Activated B cell treated with CpG ODN at 0.5 μM for 24 hours (primary cell): ENCODE measurements at regions of chr5 and their contacts with region 1.

Region 1: GRCh38 chr5:35089334-35090314 is 41.9 kb upstream of the AGXT2 start:
- DNase-seq: no peak
- ATAC-seq: no peak
- H3K4me3 Mint-ChIP-seq: no peak overlapping the region
- H3K27ac Mint-ChIP-seq: no peak overlapping the region
- H3K4me1 Mint-ChIP-seq: no peaks in the 10 kb centered on the region
- H3K27me3 Mint-ChIP-seq: peaks cover 3% of the 10 kb centered on the region
- CTCF ChIP-seq: peak; percentile 59

Region 2: DNA sequence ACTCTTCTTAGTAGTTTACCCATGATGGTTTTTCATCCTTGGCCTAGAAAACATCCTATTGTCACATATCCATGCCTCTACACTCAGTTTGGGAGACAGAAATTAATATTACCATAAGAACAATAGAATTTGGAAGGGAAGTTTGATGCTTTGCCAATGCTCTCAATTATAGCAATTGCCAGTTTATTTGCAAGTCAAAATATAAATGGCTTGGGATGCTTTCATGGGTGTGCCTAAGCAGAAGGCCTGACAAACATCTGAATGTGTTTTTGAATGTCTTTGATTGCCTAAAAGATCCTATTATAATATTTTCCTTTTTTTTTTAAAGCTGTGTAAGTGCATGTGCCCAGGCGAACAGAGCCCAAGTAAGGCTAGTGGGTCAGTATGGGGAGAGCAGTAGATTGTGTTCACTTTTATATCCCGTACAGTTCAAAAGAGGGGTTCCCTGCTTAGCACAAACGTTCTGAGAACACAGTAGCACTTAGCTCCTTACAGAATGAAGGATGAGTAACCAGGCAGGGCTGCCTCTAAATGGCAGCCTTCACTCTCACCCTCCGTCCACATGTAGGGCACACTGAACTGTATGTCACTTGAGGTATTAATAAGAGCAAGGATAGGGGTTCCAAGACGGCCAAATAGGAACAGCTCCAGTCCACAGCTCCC is 14.1 kb after region 1 on chr5:
- CTCF ChIA-PET with region 1: no interaction called
- POLR2A ChIA-PET with region 1: no interaction called
- intact Hi-C with region 1: no loop called
- DNase-seq: no peak
- ATAC-seq: no peak
- H3K4me3 Mint-ChIP-seq: no peak overlapping the region
- H3K27ac Mint-ChIP-seq: no peak overlapping the region
- H3K4me1 Mint-ChIP-seq: no peaks in the 10 kb centered on the region
- H3K27me3 Mint-ChIP-seq: peaks cover 14% of the 10 kb centered on the region
- CTCF ChIP-seq: no peak

Region 3: DNA sequence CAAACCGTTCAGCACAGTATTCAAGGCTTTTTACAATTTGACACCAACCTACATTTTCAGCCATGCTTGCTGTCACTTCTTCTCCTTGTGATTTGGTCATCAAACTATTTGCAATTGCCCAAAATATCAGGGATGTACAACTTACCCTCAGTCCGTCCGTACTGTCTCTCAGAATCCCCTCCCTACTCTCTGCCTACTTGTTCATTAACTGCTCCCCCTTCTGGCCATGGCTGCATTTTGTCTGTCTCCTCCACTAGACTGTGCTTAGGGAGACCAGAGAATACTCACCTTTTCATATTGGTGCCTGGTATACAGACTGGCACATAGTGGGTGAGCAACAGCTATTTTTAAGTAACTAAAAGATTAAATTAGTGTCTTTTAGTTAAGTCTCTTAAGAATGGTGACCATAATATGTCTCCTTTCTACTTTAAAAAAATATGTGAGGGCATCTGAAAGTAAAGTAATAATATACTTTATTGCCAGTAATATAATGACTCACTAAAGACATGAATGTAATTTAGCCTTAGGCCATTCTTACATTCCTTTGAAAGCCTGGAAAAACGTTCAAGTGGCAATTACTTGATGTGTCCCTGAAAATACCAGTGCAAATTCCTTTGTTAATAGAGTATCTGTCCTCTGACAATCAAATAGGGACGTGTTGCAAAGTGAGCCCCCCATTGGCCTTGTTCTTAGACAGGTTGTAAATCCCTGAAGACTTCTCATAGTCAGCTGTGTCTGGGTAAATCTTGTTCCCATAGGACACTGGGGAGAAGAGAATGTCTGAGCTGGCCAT is 112.9 kb after region 1 on chr5:
- CTCF ChIA-PET with region 1: interaction called, 9 read pairs
- POLR2A ChIA-PET with region 1: no interaction called
- intact Hi-C with region 1: loop called (anchors 1 kb)
- DNase-seq: no peak
- ATAC-seq: peak; percentile 93
- H3K4me3 Mint-ChIP-seq: no peak overlapping the region
- H3K27ac Mint-ChIP-seq: no peak overlapping the region
- H3K4me1 Mint-ChIP-seq: peaks cover 2% of the 10 kb centered on the region
- H3K27me3 Mint-ChIP-seq: peaks cover 3% of the 10 kb centered on the region
- CTCF ChIP-seq: no peak

Region 4: DNA sequence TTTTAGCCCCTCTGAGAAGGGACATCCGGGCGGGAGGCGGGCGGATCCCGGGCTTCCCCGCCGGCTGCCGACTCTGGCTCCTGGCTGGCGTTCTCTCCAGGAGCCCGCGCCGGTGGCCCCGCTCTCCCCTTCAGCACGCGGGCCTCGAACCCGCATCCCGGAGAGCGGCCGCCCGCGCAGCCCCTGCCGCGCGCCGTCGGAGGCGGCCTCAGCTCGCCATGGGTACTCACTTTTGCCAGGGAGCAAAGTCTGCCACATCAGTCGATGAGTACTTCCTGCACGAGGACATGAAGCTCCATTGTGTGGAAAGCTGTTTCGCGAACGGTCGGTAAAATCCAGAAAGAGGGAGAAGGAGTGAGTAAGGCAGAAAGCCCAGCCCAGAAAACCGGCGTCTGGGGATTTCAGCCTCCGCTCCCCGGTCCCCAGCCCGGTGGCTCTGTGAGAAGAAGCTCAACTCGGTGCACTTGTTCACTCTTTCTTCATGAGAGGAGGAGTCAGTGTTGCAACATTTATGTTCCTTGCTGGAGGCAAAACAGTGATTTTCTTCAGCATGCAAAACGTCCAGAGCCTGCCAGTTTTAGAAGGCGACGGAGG is 140.5 kb after region 1 on chr5 and contains the start of gene PRLR:
- CTCF ChIA-PET with region 1: no interaction called
- POLR2A ChIA-PET with region 1: no interaction called
- intact Hi-C with region 1: no loop called
- DNase-seq: no peak
- ATAC-seq: peak; percentile 35
- H3K4me3 Mint-ChIP-seq: peak within 1 kb of the TSS; percentile 84
- H3K27ac Mint-ChIP-seq: peak within 1 kb of the TSS; percentile 62
- H3K4me1 Mint-ChIP-seq: peaks cover 15% of the 10 kb centered on the region
- H3K27me3 Mint-ChIP-seq: peaks cover 43% of the 10 kb centered on the region
- CTCF ChIP-seq: no peak
- total RNA-seq, gene PRLR: 2.3 and 3.7 TPM in 2 replicates

Region 5: GRCh38 chr5:35436410-35437057 is 346.9 kb after region 1 on chr5:
- CTCF ChIA-PET with region 1: interaction called, 3 read pairs
- POLR2A ChIA-PET with region 1: no interaction called
- intact Hi-C with region 1: loop called (anchors 1 kb)
- DNase-seq: no peak
- ATAC-seq: no peak
- H3K4me3 Mint-ChIP-seq: no peak overlapping the region
- H3K27ac Mint-ChIP-seq: no peak overlapping the region
- H3K4me1 Mint-ChIP-seq: no peaks in the 10 kb centered on the region
- H3K27me3 Mint-ChIP-seq: peaks cover 10% of the 10 kb centered on the region
- CTCF ChIP-seq: no peak

Region 6: DNA sequence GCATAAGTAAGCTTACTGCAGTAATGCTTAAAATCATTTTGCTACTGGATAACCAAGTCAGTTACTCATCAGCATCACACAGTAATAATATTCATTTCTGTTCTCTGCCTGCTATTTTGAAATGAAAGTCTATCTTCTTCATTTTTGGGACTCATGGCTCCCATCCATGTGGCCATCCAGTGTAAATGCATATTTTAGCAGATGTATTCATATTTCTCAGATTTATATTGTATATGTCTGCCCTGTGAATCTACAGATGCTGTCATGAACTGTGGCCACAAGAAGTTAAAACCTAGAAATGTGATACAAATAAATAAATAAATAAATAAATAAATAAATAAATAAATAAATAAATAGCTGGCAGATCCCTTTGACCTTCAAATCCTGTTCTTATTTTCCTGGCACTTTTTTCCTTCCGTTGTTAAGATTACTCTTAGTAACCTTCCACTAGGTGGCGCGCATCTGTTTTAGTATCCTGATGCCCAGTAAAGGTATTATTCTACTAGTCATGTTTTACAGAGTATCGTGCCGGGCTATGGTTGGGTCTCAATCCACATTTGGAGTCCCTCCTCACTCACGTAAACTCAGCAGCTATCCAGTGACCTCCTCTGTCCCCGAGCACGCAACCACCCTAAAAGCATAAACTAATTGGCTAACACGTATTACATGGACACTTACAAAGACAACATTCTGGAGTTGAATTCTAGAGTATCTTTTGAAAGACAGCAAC is 687.9 kb after region 1 on chr5:
- CTCF ChIA-PET with region 1: interaction called, 3 read pairs
- POLR2A ChIA-PET with region 1: no interaction called
- intact Hi-C with region 1: loop called (anchors 5 kb)
- DNase-seq: no peak
- ATAC-seq: no peak
- H3K4me3 Mint-ChIP-seq: no peak overlapping the region
- H3K27ac Mint-ChIP-seq: no peak overlapping the region
- H3K4me1 Mint-ChIP-seq: no peaks in the 10 kb centered on the region
- H3K27me3 Mint-ChIP-seq: no peaks in the 10 kb centered on the region
- CTCF ChIP-seq: no peak